Colonic mucosa (tissue), 4 donors: ENCODE measurements at regions of chr1 and their contacts with region 1.

Region 1: DNA sequence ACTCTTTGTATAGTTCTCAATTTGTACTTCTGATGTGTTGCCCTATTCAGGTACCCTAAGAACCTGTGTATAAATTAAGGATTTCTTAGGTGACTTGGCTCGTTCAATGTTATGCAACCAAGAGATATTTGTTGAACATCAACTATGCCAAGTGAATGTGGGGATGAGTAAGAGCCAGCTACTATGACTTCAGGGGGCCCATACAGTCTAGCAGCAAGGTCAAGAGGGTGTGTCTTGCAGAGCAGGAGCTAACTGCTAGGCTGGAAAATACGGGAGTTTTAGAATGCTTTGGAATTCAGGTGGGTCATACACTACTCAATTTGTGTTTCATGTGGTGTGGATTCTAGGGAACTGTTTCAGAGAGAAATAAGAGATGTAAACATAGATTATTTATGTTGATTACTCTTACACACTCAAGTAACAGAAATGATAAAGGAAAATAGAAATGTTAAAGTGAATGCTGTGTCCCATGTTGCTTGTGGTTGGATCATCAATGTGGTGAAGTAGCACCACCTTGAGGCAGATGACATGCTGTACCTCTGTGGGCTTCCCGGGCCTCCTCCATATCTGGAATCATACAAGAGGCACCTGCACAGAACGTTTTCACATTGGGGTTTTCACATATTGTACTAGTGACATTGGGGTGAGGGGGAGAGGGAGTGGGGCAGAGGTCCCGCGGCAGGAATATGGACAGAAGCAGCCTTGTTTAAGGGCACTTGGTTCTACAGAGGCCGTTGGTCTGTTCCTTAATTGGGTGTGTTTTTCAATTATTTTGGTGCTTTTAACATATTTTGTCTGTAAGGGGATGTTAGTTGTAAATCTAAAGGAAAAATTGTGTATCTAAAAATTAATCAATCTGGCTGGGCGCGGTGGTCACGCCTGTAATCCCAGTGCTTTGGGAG is 12.4 kb downstream of the ARPC5 start:
- DNase-seq: peak; percentile 62
- H3K4me3 ChIP-seq: no peak overlapping the region
- H3K27ac ChIP-seq: no peak overlapping the region
- H3K4me1 ChIP-seq: no peaks in the 10 kb centered on the region
- H3K27me3 ChIP-seq: no peaks in the 10 kb centered on the region
- CTCF ChIP-seq: peak; percentile 69

Region 2: GRCh38 chr1:183543619-183544204 is 79.4 kb before region 1 on chr1:
- intact Hi-C with region 1: loop called (anchors 10 kb)
- DNase-seq: peak; percentile 27
- H3K4me3 ChIP-seq: no peak overlapping the region
- H3K27ac ChIP-seq: no peak overlapping the region
- H3K4me1 ChIP-seq: no peaks in the 10 kb centered on the region
- H3K27me3 ChIP-seq: no peaks in the 10 kb centered on the region
- CTCF ChIP-seq: peak; percentile 52

Region 3: GRCh38 chr1:183956559-183957188 is 333.5 kb after region 1 on chr1:
- intact Hi-C with region 1: no loop called
- DNase-seq: no peak
- H3K4me3 ChIP-seq: no peak overlapping the region
- H3K27ac ChIP-seq: peak overlapping the region; percentile 37
- H3K4me1 ChIP-seq: no peaks in the 10 kb centered on the region
- H3K27me3 ChIP-seq: no peaks in the 10 kb centered on the region
- CTCF ChIP-seq: no peak